ENCODE measurements at regions of chr3 and their contacts with region 1.

Region 1: DNA sequence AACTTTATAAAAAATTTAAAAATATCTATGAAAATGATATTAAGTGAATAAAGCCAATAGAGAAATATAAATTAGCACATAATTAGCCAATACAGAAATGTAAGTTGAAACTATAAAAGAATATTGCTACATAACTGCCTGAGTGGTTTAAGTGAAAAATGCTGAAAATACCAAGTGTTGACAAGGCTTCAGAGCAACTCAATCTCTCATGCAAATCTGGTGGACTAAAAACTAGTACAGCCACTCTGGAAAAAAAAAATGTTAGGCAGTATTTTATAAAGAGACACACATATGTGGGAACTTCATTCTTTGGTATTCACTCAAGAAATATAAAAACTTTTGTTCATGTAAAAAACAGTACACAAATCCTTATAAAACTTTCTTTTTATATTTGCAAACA is 833.7 kb upstream of the ROBO1 start:
- DNase-seq: no peak
- ATAC-seq: no peak

Region 2: GRCh38 chr3:80050826-80051601 is 550.5 kb before region 1 on chr3:
- intact Hi-C with region 1: loop called (anchors 5 kb)
- DNase-seq: no peak
- ATAC-seq: peak; percentile 38

Region 3: DNA sequence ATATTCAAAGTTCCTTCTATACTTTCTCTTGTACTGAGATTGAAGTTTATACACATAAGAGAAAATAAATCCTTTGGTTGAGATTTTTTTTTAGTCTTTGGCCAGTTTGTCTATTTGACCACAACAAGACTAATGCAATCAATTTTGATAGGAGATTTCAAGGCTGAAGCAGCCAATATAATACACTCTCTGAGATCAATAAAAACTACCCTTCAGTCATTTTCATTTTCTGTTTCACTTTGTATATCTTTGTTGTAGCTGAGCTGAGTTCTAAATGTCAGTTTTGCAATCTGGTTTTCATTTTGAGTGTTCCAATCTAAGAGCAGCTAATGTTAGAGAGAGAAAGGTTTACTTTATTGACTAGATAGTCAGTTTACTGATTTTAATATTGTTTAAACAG is 209.9 kb before region 1 on chr3:
- intact Hi-C with region 1: no loop called
- DNase-seq: no peak
- ATAC-seq: no peak

Region 4: DNA sequence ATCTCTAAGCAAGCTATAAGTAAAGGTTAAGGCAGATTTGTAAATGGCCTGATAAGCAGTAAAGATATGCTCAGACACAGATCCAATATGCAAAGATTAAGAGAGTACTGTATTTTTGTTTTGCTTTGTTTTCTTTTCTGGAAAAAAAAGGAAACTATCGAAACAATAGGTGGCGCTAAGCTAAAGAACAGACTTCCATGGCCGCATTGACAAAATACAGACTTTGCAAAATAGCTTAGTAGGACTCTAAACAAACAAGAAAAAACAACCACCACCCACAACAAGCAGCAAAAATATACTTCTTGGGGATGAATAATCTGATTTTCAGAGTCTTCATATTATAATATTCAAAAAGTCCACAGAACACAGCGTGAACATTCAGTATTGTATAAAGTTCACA is 75.3 kb before region 1 on chr3:
- intact Hi-C with region 1: loop called (anchors 2 kb)
- DNase-seq: no peak
- ATAC-seq: no peak